HepG2 (cell line): ENCODE measurements at regions of chr19 and their contacts with region 1.

Region 1: DNA sequence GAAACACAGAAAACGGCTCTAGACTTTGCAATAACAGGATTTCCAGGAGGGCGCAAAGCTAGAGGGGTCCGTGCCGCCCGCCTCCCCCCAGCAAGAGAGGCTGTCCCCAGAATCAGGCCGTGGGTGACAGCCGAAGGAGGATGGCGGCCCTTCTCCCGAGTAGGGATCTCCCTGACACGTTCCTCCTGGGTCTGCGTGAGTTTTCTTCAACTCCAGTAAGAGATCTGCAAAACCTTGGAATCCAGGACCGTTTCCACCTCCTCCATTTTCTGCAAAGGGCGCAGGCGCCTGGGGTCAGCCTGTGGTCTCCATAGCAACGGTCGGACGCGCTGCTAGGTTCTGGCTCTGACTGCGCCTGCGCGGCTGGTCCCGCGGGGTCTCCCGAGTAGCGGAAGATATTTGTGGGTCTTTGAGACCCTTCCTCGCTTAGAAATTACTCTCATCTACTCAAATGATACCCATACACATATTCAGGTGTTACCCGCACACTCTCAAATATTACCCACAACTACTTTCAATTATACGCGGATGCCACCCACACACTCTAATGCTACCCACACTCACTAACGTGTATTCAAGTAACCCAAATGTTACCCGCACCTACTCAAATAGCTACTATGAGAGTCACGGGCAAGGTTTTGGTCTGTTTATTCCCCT is 2.1 kb downstream of the PNMA8C start:
- DNase-seq: peak; percentile 71
- ATAC-seq: peak; percentile 88
- H3K4me3 ChIP-seq: peak overlapping the region; percentile 59 to 79 (median 59)
- H3K27ac ChIP-seq: peak overlapping the region; percentile 20
- H3K4me1 ChIP-seq: peaks cover 27% of the 10 kb centered on the region
- H3K27me3 ChIP-seq: peaks cover 0 to 14% of the 10 kb centered on the region in 2 experiments; a peak in 3 of 5 replicates
- CTCF ChIP-seq: no peak
- EP300 ChIP-seq: no peak
- POLR2A ChIP-seq: no peak
- RAD21 ChIP-seq: no peak

Region 2: DNA sequence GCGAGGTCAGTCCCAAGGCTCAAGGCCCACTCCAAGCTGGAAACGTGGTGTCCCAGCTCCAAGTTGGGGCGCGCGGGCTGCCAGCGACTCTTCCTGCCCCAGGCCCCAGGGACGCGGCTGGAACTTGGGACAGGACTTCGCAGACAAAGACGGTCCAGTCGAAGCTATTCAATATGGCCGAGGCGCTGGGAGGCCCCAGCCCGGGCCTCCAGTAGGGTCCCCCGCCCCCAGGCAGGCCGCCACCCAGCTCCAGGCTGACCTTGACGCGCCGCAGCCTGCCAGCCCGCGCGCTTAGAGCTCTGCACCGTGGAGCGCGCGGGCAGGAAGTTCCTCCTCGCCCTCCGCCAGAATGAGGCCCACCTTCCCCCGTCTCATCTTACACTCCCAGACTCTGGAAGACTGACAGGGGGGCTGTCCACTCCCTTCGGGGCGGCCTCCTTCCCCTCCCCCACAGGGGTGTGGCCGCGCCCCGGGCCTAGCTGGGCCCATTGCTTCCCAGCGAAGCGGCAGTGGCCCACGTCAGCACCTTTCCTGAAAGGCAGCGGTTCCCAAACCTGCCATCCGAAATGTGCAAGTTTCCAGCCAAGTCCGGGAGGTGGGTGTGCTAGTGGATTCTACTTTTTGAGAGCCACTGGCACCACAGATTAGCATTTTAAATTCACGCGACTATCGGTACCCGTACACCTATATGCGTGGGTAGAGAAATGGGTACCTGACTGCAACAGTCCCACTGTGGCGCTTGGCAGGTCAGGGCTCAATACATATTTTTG is 13.2 kb before region 1 on chr19 and contains the start of gene CCDC8:
- CTCF ChIA-PET with region 1: no interaction called
- POLR2A ChIA-PET with region 1: no interaction called
- in situ Hi-C with region 1: no loop called
- intact Hi-C with region 1: loop called (anchors 1 kb)
- DNase-seq: no peak
- ATAC-seq: no peak
- H3K4me3 ChIP-seq: no peak within 1 kb of the TSS
- H3K27ac ChIP-seq: no peak within 1 kb of the TSS
- H3K4me1 ChIP-seq: peaks cover 27% of the 10 kb centered on the region
- H3K27me3 ChIP-seq: 0 out of 5 replicates have a peak, but pooled peaks cover 0 to 3% of the 10 kb centered on the region in 2 experiments
- CTCF ChIP-seq: no peak
- EP300 ChIP-seq: no peak
- POLR2A ChIP-seq: no peak
- RAD21 ChIP-seq: no peak
- total RNA-seq, gene CCDC8: 0.04 TPM in 1 of 2 replicates, not detected in the other